ENCODE measurements at regions of chr11 and their contacts with region 1.

Region 1: DNA sequence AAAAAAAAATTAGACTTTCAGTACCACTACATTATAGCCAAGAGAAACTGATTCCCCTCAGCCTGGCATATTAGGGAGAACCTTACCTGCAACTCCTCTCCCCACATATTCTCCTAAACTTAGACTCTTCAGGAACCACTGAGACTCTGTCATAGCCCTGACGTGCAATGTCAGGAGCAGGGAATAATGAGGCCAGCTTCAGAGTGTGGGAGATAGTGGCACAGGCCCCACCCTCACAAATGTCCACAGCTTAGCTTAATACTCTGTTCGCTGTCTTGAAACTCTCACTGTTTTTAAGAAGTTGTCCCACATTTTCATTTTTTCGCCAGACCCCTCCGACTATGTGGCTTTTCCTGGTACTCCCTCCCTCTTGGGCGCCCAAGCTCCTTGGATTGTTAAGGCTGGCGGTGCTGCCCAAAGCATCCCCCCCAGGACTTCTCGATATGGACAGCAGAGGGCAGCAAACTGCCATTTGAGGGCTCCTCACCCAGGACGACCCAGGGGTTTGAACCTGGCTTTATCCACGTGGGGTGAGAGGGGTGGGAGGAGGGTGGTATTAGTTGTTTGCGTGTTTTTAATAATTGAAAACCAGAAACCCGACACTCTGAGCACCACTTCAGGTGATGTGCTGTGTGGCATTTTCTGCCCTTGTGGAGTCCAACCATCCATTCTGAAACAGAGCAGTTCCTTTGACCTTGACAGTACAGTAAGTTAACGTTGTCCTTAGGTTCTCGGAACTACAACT is 45.2 kb upstream of the RASSF10 start:
- DNase-seq: peak; percentile 59
- ATAC-seq: peak; percentile 98
- H3K4me3 ChIP-seq: no peak overlapping the region
- H3K27ac ChIP-seq: no peak overlapping the region
- H3K4me1 ChIP-seq: peaks cover 0 to 20% of the 10 kb centered on the region in 2 experiments; a peak in 1 of 4 replicates
- H3K27me3 ChIP-seq: no peaks in the 10 kb centered on the region
- CTCF ChIP-seq: peak; percentile 86 to 97 (median 95)
- POLR2A ChIP-seq: no peak
- RAD21 ChIP-seq: peak; percentile 97

Region 2: GRCh38 chr11:12288212-12288930 is 675.6 kb before region 1 on chr11:
- CTCF ChIA-PET with region 1: interaction called, 40 read pairs
- POLR2A ChIA-PET with region 1: no interaction called
- RAD21 ChIA-PET with region 1: interaction called, 3 read pairs
- intact Hi-C with region 1: loop called (anchors 2 kb)
- DNase-seq: peak; percentile 71
- ATAC-seq: peak; percentile 54
- H3K4me3 ChIP-seq: peak overlapping the region; percentile 20 to 50; a peak in 2 of 4 replicates
- H3K27ac ChIP-seq: peak overlapping the region; percentile 62
- H3K4me1 ChIP-seq: peaks cover 25 to 39% of the 10 kb centered on the region in 2 experiments
- H3K27me3 ChIP-seq: no peaks in the 10 kb centered on the region
- CTCF ChIP-seq: peak; percentile 83 to 96 (median 95)
- POLR2A ChIP-seq: no peak
- RAD21 ChIP-seq: peak; percentile 95

Region 3: GRCh38 chr11:13143486-13144297 is 179.7 kb after region 1 on chr11:
- CTCF ChIA-PET with region 1: interaction called, 6 read pairs
- POLR2A ChIA-PET with region 1: no interaction called
- RAD21 ChIA-PET with region 1: interaction called in 1 of 2 experiments, 5 read pairs
- intact Hi-C with region 1: loop called (anchors 2 kb)
- DNase-seq: no peak
- ATAC-seq: no peak
- H3K4me3 ChIP-seq: no peak overlapping the region
- H3K27ac ChIP-seq: no peak overlapping the region
- H3K4me1 ChIP-seq: peaks cover 19 to 36% of the 10 kb centered on the region in 2 experiments
- H3K27me3 ChIP-seq: no peaks in the 10 kb centered on the region
- CTCF ChIP-seq: no peak
- POLR2A ChIP-seq: no peak
- RAD21 ChIP-seq: no peak

Region 4: DNA sequence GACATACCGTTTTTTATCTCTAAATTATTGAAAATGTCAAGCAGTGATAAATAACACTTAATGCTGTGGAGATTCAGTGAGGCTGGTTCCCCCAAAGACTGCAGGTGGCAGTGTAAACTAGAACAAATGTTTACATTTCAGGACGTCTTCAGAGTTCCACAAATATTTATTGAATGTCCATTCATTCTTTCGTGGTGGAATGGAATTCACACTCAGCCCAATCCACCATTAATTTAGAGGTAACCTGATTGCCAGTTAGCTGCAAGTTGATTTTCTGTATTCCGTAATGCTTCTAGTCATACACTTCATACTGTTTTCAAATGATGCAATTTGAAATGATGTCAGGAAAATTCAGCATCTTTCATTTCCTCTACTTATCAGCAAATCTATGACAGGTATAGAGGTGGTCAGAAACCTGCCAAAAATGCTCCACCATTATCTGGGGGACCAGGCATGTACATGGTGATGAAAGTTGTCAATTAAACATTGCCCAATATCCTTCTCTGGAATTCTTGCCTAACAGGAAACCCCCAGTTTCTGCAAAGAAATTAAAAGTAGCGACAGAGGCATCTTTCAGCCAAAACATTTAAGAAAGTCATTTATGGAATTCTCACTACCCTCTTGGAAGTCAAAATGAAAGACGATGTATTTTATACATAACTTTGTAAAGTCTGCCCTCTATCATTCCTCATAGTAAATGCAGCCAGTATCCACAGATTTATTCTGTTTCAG is 219.3 kb after region 1 on chr11:
- CTCF ChIA-PET with region 1: interaction called, 18 read pairs
- POLR2A ChIA-PET with region 1: no interaction called
- RAD21 ChIA-PET with region 1: interaction called, 3 to 4 read pairs
- intact Hi-C with region 1: loop called (anchors 1 kb)
- DNase-seq: no peak
- ATAC-seq: peak; percentile 85
- H3K4me3 ChIP-seq: peak overlapping the region; percentile 34 to 52
- H3K27ac ChIP-seq: no peak overlapping the region
- H3K4me1 ChIP-seq: peaks cover 0 to 6% of the 10 kb centered on the region in 2 experiments; a peak in 2 of 4 replicates
- H3K27me3 ChIP-seq: no peaks in the 10 kb centered on the region
- CTCF ChIP-seq: peak; percentile 59 to 61 (median 60)
- POLR2A ChIP-seq: no peak
- RAD21 ChIP-seq: peak; percentile 70

Region 5: GRCh38 chr11:13343931-13344717 is 380.2 kb after region 1 on chr11:
- CTCF ChIA-PET with region 1: interaction called, 3 read pairs
- POLR2A ChIA-PET with region 1: no interaction called
- RAD21 ChIA-PET with region 1: no interaction called
- intact Hi-C with region 1: loop called (anchors 5 kb)
- DNase-seq: no peak
- ATAC-seq: peak; percentile 75
- H3K4me3 ChIP-seq: no peak overlapping the region
- H3K27ac ChIP-seq: no peak overlapping the region
- H3K4me1 ChIP-seq: peaks cover 11 to 28% of the 10 kb centered on the region in 2 experiments
- H3K27me3 ChIP-seq: no peaks in the 10 kb centered on the region
- CTCF ChIP-seq: peak; percentile 81 to 85 (median 82); a peak in 5 of 6 replicates
- POLR2A ChIP-seq: no peak
- RAD21 ChIP-seq: peak; percentile 89